ENCODE measurements at regions of chr1 and their contacts with region 1.

Region 1: GRCh38 chr1:9357958-9358357 is 65.3 kb downstream of the SPSB1 start:
- DNase-seq: no peak
- ATAC-seq: no peak
- H3K4me3 ChIP-seq: no peak overlapping the region
- H3K27ac ChIP-seq: no peak overlapping the region
- H3K4me1 ChIP-seq: peaks cover 0 to 3% of the 10 kb centered on the region in 2 donors
- H3K27me3 ChIP-seq: no peaks in the 10 kb centered on the region

Region 2: DNA sequence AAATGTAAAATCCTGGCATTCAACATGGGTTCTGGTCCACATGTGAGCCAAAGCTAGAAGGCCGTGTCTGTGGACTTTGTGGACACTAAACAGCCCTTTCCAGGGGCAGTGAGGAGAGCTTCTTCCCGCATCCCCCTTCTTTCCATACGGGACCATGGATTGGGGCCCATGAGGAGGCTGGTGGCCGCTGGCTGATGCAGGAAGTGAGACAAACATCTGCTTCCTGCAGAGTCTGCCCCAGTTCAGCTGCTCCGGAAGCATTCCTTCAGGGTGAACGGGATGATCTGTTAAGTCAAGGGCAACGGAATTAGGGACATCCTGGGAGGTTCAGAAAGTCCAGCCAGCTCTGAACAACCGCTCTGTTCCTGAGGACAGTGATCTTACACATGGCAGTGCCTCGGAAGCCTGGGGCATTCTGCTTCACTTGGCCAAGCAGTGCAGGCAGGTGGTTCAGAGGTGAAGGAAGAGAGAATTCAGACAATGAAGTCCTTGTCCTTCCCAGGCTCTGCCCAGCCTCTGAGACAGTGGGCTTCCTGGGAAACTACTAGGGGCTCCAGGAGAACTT is 410.7 kb before region 1 on chr1:
- intact Hi-C with region 1: no loop called
- DNase-seq: no peak
- ATAC-seq: no peak
- H3K4me3 ChIP-seq: no peak overlapping the region
- H3K27ac ChIP-seq: no peak overlapping the region
- H3K4me1 ChIP-seq: no peaks in the 10 kb centered on the region
- H3K27me3 ChIP-seq: no peaks in the 10 kb centered on the region

Region 3: DNA sequence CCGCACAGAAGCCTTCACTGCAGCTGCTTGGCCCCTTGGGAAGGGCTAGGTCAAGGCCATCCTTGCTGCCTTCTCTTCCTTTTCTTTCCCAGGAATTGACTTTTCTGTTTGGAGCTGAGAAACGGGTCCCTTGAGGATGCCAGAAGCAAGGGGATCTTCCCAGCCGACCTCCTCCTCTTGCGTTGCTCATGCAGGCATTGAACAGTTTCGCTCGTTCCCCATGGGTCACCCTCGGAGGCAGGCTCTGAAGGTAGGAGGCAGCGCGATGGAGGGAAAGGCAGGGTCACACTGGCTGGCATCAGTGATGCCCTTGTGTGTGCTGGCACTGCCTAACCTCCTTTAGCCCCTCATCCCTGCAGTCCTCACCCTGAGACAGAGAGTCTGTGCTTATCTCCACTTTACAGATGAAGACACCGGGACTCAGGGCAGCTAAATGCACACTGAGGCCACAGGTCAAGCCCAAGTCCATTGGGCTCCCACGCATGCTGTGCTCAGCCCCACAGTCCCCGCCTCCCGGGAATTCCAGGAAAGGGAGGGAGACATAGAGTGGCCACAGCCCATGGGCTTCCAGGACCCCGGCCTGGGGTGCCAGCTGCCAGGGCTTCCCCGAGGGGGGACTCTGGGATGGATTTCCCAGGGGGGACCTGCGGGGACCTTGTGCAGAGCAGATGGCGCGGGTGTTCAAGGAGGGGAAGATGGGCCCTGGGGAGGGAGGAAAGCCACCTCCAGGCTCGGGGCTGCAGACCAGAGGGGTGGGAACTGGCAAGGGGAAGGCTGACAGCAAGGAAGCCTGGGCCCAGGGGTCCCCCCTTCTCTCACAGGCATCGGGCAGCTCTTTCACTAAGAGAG is 24.9 kb after region 1 on chr1:
- intact Hi-C with region 1: loop called in 1 of 2 experiments (anchors 1 kb)
- DNase-seq: no peak
- ATAC-seq: no peak
- H3K4me3 ChIP-seq: no peak overlapping the region
- H3K27ac ChIP-seq: peak overlapping the region in 1 of 2 donors; percentile 41
- H3K4me1 ChIP-seq: no peaks in the 10 kb centered on the region
- H3K27me3 ChIP-seq: no peaks in the 10 kb centered on the region